Activated CD4-positive, alpha-beta T cell treated with anti-CD3 and anti-CD28 coated beads for 36 hours (primary cell): ENCODE measurements at regions of chr12 and their contacts with region 1.

Region 1: GRCh38 chr12:111529424-111530368 is 69.4 kb downstream of the ATXN2 start:
- DNase-seq: peak; percentile 78
- ATAC-seq: peak; percentile 90
- H3K4me3 Mint-ChIP-seq: no peak overlapping the region
- H3K27ac Mint-ChIP-seq: peak overlapping the region; percentile 10
- H3K4me1 Mint-ChIP-seq: peaks cover 13% of the 10 kb centered on the region
- H3K27me3 Mint-ChIP-seq: no peaks in the 10 kb centered on the region

Region 2: GRCh38 chr12:111330800-111331752 is 198.6 kb before region 1 on chr12:
- CTCF ChIA-PET with region 1: no interaction called
- POLR2A ChIA-PET with region 1: no interaction called
- intact Hi-C with region 1: loop called (anchors 1 to 2 kb)
- DNase-seq: no peak
- ATAC-seq: no peak
- H3K4me3 Mint-ChIP-seq: no peak overlapping the region
- H3K27ac Mint-ChIP-seq: no peak overlapping the region
- H3K4me1 Mint-ChIP-seq: no peaks in the 10 kb centered on the region
- H3K27me3 Mint-ChIP-seq: no peaks in the 10 kb centered on the region

Region 3: DNA sequence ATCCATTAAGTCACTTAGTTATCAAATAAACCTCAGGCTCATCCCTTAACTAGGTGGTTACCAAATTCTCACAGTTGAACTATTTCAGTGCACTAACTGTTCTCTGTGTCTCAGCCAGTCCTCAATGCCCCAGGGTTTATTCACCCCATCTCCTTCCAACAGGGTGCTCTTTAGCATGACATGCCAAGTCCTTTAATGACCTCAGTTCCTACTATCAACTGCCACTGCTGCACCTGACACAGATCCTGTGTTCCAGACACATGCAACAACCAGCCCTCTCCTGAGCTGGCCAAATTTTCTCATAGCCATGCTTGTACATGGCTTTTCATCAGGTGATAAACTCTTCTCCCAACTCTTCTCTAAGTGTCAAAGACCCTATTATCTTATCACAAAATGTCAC is 10.6 kb before region 1 on chr12:
- CTCF ChIA-PET with region 1: interaction called, 10 read pairs
- POLR2A ChIA-PET with region 1: interaction called, 7 read pairs
- intact Hi-C with region 1: no loop called
- DNase-seq: no peak
- ATAC-seq: no peak
- H3K4me3 Mint-ChIP-seq: no peak overlapping the region
- H3K27ac Mint-ChIP-seq: no peak overlapping the region
- H3K4me1 Mint-ChIP-seq: peaks cover 3% of the 10 kb centered on the region
- H3K27me3 Mint-ChIP-seq: no peaks in the 10 kb centered on the region